WTC11 (cell line): ENCODE measurements at regions of chr1 and their contacts with region 1.

Region 1: GRCh38 chr1:41812051-41812450 is 106.7 kb downstream of the HIVEP3 start:
- DNase-seq: peak; percentile 74
- ATAC-seq: peak; percentile 88
- H3K4me3 Mint-ChIP-seq: no peak overlapping the region
- H3K27ac Mint-ChIP-seq: peak overlapping the region; percentile 80
- H3K4me1 Mint-ChIP-seq: peaks cover 5% of the 10 kb centered on the region
- H3K27me3 Mint-ChIP-seq: no peaks in the 10 kb centered on the region
- CTCF ChIP-seq: peak; percentile 59

Region 2: GRCh38 chr1:41698916-41699860 is 112.9 kb before region 1 on chr1:
- CTCF ChIA-PET with region 1: no interaction called
- POLR2A ChIA-PET with region 1: no interaction called
- DNase-seq: no peak
- ATAC-seq: no peak
- H3K4me3 Mint-ChIP-seq: no peak overlapping the region
- H3K27ac Mint-ChIP-seq: no peak overlapping the region
- H3K4me1 Mint-ChIP-seq: no peaks in the 10 kb centered on the region
- H3K27me3 Mint-ChIP-seq: no peaks in the 10 kb centered on the region
- CTCF ChIP-seq: no peak

Region 3: GRCh38 chr1:41823471-41823870 is 11.4 kb after region 1 on chr1:
- CTCF ChIA-PET with region 1: interaction called, 12 read pairs
- POLR2A ChIA-PET with region 1: no interaction called
- DNase-seq: peak; percentile 79
- ATAC-seq: peak; percentile 99
- H3K4me3 Mint-ChIP-seq: no peak overlapping the region
- H3K27ac Mint-ChIP-seq: peak overlapping the region; percentile 37; the same call in 1 of the 2 replicates
- H3K4me1 Mint-ChIP-seq: peaks cover 34% of the 10 kb centered on the region
- H3K27me3 Mint-ChIP-seq: peaks cover 3% of the 10 kb centered on the region; the same call in 1 of the 2 replicates
- CTCF ChIP-seq: no peak

Region 4: DNA sequence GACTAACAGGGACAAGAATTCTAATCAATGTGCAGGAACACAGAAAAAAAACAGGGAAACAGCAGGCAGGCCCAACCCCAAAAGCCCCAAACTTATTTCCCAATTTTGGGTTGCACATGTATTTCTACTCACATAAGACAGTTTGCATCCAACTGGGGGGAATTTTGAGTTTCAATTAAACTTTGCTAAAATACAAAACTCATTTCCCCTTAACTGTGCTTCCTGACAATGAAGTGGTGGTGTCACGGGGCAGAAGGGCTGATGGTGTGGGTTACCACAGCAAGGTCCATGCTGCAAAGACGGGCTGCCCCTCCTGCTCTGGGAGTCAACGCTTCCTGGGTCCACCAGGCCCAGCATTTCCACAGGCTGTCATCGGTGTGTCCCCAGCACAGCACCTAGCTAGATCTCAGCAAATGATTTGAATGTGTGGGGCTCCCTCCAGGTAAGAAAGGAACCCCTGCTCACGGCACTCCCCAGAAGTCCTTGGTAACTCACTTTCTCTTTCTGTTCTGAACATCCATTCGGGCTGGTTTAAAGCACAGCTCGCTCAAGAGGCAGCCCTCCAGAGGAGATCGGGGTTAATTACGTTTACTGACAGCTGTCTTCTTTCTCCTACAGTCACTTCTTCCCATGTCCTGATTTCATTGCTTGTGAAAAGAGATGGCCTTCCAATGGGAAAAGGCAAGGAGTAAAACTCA is 79.3 kb after region 1 on chr1:
- CTCF ChIA-PET with region 1: interaction called, 11 read pairs
- POLR2A ChIA-PET with region 1: no interaction called
- DNase-seq: no peak
- ATAC-seq: peak; percentile 58
- H3K4me3 Mint-ChIP-seq: no peak overlapping the region
- H3K27ac Mint-ChIP-seq: no peak overlapping the region
- H3K4me1 Mint-ChIP-seq: peaks cover 5% of the 10 kb centered on the region
- H3K27me3 Mint-ChIP-seq: no peaks in the 10 kb centered on the region
- CTCF ChIP-seq: no peak